Activated B cell treated with CpG ODN at 0.5 μM for 24 hours (primary cell): ENCODE measurements at regions of chr3 and their contacts with region 1.

Region 1: DNA sequence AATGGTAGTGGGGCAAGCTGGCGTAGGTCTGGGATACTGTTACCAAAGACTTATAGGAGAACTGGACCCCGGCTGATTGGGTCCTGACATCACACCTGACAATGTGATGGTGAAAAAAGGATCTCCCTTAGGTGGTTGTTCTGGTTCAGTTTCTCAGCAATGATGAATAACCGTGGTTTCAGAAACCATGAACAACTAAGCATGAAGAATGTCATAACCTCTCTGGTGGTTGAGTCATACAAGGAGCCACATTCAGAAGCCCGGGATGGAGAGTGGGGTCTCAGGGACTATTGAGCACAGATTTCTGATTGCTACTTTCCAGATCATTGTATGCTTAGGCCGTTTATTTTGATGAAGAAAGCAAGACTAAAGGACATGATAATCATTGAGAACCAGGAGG is 17.4 kb downstream of the GPR160 start:
- DNase-seq: no peak
- ATAC-seq: peak; percentile 75
- H3K4me3 Mint-ChIP-seq: peak overlapping the region; percentile 77
- H3K27ac Mint-ChIP-seq: peak overlapping the region; percentile 87
- H3K4me1 Mint-ChIP-seq: peaks cover 57% of the 10 kb centered on the region
- H3K27me3 Mint-ChIP-seq: no peaks in the 10 kb centered on the region
- CTCF ChIP-seq: no peak

Region 2: DNA sequence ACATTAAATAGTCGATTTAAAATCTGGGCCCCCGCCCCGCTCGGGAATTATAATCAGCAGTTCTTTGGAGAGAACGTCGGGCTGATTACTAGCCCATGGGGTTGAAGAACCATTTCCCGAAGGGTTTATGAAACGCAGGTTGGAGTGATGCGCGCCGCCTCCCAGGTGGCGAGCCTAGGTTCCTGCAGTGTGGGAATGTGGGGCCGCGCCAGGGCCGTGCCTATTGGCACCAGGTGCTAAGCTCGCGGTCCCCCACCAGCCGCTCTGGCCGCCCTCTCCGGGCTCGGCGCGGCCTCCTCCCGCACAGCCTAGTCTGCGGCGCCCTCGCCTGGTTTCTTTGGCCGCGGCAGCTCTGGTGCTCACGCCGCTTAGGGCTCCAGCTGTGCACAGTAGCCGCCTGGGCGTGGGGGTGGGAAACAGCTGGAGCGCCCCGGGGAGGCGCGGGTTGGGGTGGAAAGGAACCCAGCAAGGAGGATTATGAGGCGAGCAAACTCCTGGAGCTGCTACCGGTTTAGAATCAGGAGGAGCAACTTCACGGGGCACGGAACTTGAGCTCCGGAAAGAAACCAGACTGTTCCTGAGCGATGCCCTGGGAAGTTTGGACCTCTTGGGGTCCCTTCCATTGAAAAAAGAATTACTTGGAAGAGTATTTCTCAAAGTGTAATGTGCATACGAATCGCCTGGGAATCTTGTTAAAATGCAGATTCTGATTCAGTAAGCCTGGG is 386.1 kb before region 1 on chr3:
- CTCF ChIA-PET with region 1: no interaction called
- POLR2A ChIA-PET with region 1: no interaction called
- intact Hi-C with region 1: loop called (anchors 10 kb)
- DNase-seq: peak; percentile 53
- ATAC-seq: peak; percentile 81
- H3K4me3 Mint-ChIP-seq: peak overlapping the region; percentile 54
- H3K27ac Mint-ChIP-seq: no peak overlapping the region
- H3K4me1 Mint-ChIP-seq: peaks cover 21% of the 10 kb centered on the region
- H3K27me3 Mint-ChIP-seq: peaks cover 81% of the 10 kb centered on the region
- CTCF ChIP-seq: no peak

Region 3: DNA sequence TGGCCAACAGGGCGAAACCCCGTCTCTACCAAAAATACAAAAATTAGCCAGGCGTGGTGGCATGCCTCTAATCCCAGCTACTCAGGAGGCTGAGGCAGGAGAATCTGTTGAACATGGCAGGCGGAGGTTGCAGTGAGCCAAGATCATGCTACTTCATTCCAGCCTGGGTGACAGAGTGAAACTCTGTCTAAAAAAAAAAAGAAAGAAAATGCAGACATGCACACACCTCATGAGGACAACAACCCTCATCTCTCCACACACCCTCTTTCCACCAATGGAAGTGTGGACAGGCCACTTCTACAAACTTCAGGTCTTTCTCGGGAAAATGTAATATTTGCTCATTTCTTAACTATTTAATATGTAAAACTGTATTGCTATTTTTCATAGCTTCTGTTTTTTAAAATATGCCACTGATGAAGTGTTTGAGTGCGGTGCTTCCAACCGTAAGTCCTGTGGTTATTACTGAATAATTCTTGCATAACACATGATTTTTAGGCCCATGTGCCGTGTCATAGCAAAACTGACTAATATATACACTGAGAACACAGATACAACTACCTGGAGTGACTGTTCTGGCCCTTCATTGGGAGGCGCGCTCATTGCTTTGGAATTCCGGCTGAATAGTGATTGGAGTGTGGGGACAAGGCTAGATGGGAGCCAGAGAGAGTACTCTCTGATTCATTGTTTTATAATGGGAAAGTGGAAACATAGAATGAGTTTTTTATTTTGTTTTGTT is 208.6 kb before region 1 on chr3:
- CTCF ChIA-PET with region 1: no interaction called
- POLR2A ChIA-PET with region 1: interaction called, 7 read pairs
- intact Hi-C with region 1: loop called (anchors 2 kb)
- DNase-seq: no peak
- ATAC-seq: peak; percentile 95
- H3K4me3 Mint-ChIP-seq: peak overlapping the region; percentile 67
- H3K27ac Mint-ChIP-seq: peak overlapping the region; percentile 92
- H3K4me1 Mint-ChIP-seq: peaks cover 57% of the 10 kb centered on the region
- H3K27me3 Mint-ChIP-seq: no peaks in the 10 kb centered on the region
- CTCF ChIP-seq: no peak

Region 4: DNA sequence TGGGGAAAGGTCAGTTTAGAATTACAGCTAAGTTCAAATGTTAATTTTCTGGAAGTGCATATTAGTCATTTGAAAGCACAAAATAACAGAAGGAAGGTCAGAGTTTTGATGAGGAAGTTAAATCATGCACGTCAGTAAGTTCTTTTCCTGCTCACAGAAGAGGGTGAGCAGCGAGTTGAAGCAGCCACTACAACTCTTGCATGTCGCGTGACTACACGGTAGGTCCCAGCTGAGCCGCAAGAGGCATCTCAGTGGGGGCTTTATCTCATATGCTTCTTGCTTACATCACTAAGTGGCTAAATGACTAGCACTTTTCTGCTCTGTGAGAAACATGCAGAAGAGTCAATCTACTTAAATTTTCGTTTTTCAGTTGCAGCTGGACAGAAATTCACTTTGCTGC is 109.9 kb before region 1 on chr3:
- CTCF ChIA-PET with region 1: no interaction called
- POLR2A ChIA-PET with region 1: interaction called, 7 read pairs
- intact Hi-C with region 1: loop called (anchors 1 kb)
- DNase-seq: peak; percentile 54
- ATAC-seq: peak; percentile 91
- H3K4me3 Mint-ChIP-seq: peak overlapping the region; percentile 68
- H3K27ac Mint-ChIP-seq: peak overlapping the region; percentile 93
- H3K4me1 Mint-ChIP-seq: peaks cover 93% of the 10 kb centered on the region
- H3K27me3 Mint-ChIP-seq: no peaks in the 10 kb centered on the region
- CTCF ChIP-seq: no peak

Region 5: GRCh38 chr3:170037463-170038433 is 17.5 kb before region 1 on chr3 and contains the start of gene GPR160:
- CTCF ChIA-PET with region 1: interaction called, 13 read pairs
- POLR2A ChIA-PET with region 1: interaction called, 121 read pairs
- intact Hi-C with region 1: loop called (anchors 1 kb)
- DNase-seq: peak; percentile 88
- ATAC-seq: peak; percentile 77
- H3K4me3 Mint-ChIP-seq: peak within 1 kb of the TSS; percentile 93
- H3K27ac Mint-ChIP-seq: peak within 1 kb of the TSS; percentile 88
- H3K4me1 Mint-ChIP-seq: peaks cover 46% of the 10 kb centered on the region
- H3K27me3 Mint-ChIP-seq: no peaks in the 10 kb centered on the region
- CTCF ChIP-seq: peak; percentile 52
- total RNA-seq, gene GPR160: 63.2 and 65.5 TPM in 2 replicates

Region 6: GRCh38 chr3:170180908-170181879 is 126.0 kb after region 1 on chr3 and contains the start of gene PHC3:
- CTCF ChIA-PET with region 1: no interaction called
- POLR2A ChIA-PET with region 1: interaction called, 13 read pairs
- intact Hi-C with region 1: loop called (anchors 2 kb)
- DNase-seq: peak; percentile 92
- ATAC-seq: peak; percentile 80
- H3K4me3 Mint-ChIP-seq: peak within 1 kb of the TSS; percentile 96
- H3K27ac Mint-ChIP-seq: peak within 1 kb of the TSS; percentile 98
- H3K4me1 Mint-ChIP-seq: peaks cover 32% of the 10 kb centered on the region
- H3K27me3 Mint-ChIP-seq: no peaks in the 10 kb centered on the region
- CTCF ChIP-seq: no peak
- total RNA-seq, gene PHC3: 105 TPM in 2 replicates